Thyroid gland (tissue), 4 donors: ENCODE measurements at regions of chrX and their contacts with region 1.

Region 1: DNA sequence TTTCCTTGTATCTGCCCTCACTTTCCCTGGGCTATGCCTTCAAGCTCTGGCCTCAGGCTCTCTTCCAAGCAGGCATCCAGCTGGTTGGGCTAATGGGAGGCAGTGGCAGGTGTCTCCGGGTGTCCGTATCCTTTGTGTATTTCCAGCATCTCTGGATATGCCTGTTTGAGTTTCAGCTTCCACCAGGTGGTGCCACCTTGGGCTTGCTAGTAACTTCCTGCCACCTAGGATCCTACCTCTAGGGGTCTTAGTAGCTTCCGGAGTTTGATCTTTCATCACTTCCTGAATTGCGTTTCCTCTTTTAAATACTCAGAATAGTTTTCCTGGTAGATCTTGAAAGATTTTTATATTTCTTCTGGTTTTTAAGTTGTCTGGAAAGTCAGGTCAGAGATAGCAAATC is 23.2 kb upstream of the ANOS1 start:
- DNase-seq: no peak
- H3K4me3 ChIP-seq: no peak overlapping the region
- H3K27ac ChIP-seq: no peak overlapping the region
- H3K4me1 ChIP-seq: no peaks in the 10 kb centered on the region
- H3K27me3 ChIP-seq: no peaks in the 10 kb centered on the region
- CTCF ChIP-seq: no peak
- POLR2A ChIP-seq: no peak

Region 2: DNA sequence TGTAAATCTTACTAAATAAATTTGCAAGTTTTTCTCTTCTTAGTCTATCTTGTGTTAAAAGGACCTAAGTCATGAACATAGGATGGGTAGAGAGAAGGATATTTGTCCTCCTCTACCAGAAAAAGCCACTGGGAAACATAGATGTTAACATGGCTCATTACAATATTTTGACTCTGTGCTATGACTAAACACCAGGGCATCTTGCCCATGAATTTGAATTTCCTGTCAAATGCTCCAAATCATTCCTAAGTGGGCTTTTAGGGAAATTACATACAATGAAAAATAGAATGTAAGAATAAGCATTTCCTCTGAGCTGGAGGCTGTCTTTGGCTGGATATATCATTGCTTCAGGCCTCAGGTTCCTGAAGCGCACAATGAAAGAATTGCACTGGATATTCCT is 62.2 kb before region 1 on chrX:
- intact Hi-C with region 1: no loop called
- DNase-seq: no peak
- H3K4me3 ChIP-seq: no peak overlapping the region
- H3K27ac ChIP-seq: no peak overlapping the region
- H3K4me1 ChIP-seq: no peaks in the 10 kb centered on the region
- H3K27me3 ChIP-seq: no peaks in the 10 kb centered on the region
- CTCF ChIP-seq: no peak
- POLR2A ChIP-seq: no peak

Region 3: DNA sequence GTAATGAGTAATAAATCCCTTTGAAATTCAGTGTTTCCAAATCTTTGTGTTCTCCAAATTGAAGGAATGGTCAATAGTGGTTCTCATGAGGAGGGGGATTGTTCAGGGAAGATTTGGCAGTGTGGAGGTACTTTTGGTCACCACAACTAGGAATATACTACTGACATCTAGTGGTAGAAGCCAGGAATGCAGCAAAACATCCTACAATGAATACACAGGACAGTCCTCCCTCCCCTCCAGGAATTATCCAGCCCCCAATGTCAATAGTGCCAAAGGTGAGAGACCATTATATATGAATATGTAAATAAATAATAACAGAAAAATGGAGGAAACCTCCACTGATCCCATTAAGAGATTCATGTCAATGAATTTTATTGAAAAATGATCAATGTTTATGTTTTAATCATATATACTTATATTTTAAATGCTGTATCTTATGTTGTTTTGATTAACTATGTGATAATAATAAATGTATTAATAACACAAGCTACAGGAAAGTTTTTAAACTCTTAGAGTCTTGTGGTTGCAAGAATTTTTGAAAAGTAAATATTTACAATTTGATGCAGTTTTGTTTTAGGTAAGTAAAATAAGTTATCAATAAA is 60.4 kb after region 1 on chrX:
- intact Hi-C with region 1: loop called (anchors 10 kb)
- DNase-seq: no peak
- H3K4me3 ChIP-seq: no peak overlapping the region
- H3K27ac ChIP-seq: no peak overlapping the region
- H3K4me1 ChIP-seq: no peaks in the 10 kb centered on the region
- H3K27me3 ChIP-seq: no peaks in the 10 kb centered on the region
- CTCF ChIP-seq: peak in 4 of 6 experiments; percentile 33 to 59 (median 55)
- POLR2A ChIP-seq: no peak